Endothelial cell of umbilical vein (primary cell): ENCODE measurements at regions of chr14 and their contacts with region 1.

Region 1: GRCh38 chr14:21498553-21499526 is 12.3 kb downstream of the METTL3 start:
- DNase-seq: peak; percentile 55
- H3K4me3 ChIP-seq: no peak overlapping the region
- H3K27ac ChIP-seq: no peak overlapping the region
- H3K4me1 ChIP-seq: no peaks in the 10 kb centered on the region
- H3K27me3 ChIP-seq: no peaks in the 10 kb centered on the region
- CTCF ChIP-seq: peak; percentile 34 to 42
- POLR2A ChIP-seq: peak; percentile 10

Region 2: GRCh38 chr14:21182166-21182565 is 316.7 kb before region 1 on chr14:
- CTCF ChIA-PET with region 1: no interaction called
- POLR2A ChIA-PET with region 1: no interaction called
- dilution Hi-C with region 1: no loop called
- intact Hi-C with region 1: no loop called
- DNase-seq: no peak
- H3K4me3 ChIP-seq: no peak overlapping the region
- H3K27ac ChIP-seq: no peak overlapping the region
- H3K4me1 ChIP-seq: no peaks in the 10 kb centered on the region
- H3K27me3 ChIP-seq: peaks cover 2 to 20% of the 10 kb centered on the region in 2 experiments
- CTCF ChIP-seq: no peak
- POLR2A ChIP-seq: no peak

Region 3: DNA sequence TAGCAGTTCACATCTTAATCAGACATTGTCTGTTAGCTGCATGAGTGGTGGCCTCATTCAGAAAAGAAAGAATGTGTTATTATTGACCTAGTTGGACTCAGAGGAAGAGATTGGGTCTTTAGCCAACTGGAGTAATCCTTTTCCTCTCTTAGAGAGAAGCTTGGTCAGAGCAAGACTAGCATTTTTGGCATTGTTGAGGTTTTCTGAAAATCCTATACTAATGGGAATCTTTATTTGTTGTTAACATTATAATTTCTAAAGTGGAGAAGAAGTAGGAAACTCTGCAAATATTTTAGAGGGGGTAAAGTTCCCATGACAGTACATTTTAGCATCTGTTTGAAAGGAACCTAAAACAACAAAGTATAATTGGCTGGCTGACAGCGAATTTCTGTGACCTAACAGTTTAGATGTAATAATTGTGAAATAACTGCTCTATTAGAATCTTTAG is 12.2 kb before region 1 on chr14:
- CTCF ChIA-PET with region 1: interaction called, 15 read pairs
- POLR2A ChIA-PET with region 1: no interaction called
- dilution Hi-C with region 1: no loop called
- intact Hi-C with region 1: no loop called
- DNase-seq: no peak
- H3K4me3 ChIP-seq: no peak overlapping the region
- H3K27ac ChIP-seq: no peak overlapping the region
- H3K4me1 ChIP-seq: no peaks in the 10 kb centered on the region
- H3K27me3 ChIP-seq: no peaks in the 10 kb centered on the region
- CTCF ChIP-seq: no peak
- POLR2A ChIP-seq: no peak

Region 4: DNA sequence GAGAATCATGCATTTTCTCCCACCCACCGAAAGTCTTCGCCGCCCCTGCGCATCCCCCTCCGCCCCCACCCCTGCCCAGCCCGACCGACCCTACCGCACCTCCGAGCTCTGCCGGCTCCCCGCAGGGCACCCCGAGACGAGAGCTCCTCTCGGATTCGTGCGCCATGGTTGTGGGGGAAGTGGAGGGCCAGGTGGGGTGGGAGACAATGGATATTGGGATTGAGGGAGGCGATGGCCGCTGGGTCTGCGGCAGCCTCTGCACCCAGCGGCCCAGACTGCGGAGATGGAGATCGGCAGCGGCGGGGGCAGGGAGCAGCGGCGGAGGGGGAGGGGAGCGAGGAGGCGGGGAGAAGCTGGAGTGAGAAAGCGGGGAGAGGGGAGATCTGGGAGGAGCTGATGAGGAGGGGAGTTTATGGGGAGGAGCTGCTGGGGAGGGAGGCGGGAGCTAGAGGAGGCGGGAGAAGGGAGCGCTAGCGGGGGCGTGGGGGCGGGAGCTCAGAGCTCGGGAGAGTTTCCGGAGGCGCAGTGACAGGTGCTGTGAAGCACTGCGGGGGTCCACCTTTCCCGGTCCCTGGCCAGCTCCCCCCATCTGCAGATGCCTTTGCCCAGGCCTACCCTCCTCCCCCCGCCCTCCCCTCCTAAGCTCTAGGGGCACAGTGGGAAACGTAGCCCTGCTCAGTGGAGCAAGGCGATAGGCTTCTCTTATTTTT is 27.3 kb after region 1 on chr14 and contains the start of gene SALL2:
- CTCF ChIA-PET with region 1: interaction called, 28 read pairs
- POLR2A ChIA-PET with region 1: no interaction called
- dilution Hi-C with region 1: no loop called
- intact Hi-C with region 1: no loop called
- DNase-seq: peak; percentile 63
- H3K4me3 ChIP-seq: peak within 1 kb of the TSS; percentile 32 to 80 (median 67)
- H3K27ac ChIP-seq: no peak within 1 kb of the TSS
- H3K4me1 ChIP-seq: peaks cover 3% of the 10 kb centered on the region
- H3K27me3 ChIP-seq: peaks cover 20 to 21% of the 10 kb centered on the region in 2 experiments
- CTCF ChIP-seq: no peak
- POLR2A ChIP-seq: no peak
- total RNA-seq, gene SALL2: 4.6 and 6.8 TPM in 2 replicates

Region 5: GRCh38 chr14:21557084-21557901 is 58.5 kb after region 1 on chr14:
- CTCF ChIA-PET with region 1: interaction called, 128 read pairs
- POLR2A ChIA-PET with region 1: no interaction called
- dilution Hi-C with region 1: no loop called
- intact Hi-C with region 1: loop called (anchors 1 kb)
- DNase-seq: peak; percentile 88
- H3K4me3 ChIP-seq: peak overlapping the region in 2 of 3 experiments; percentile 25 to 30
- H3K27ac ChIP-seq: no peak overlapping the region
- H3K4me1 ChIP-seq: peaks cover 5% of the 10 kb centered on the region
- H3K27me3 ChIP-seq: no peaks in the 10 kb centered on the region
- CTCF ChIP-seq: peak; percentile 35 to 58
- POLR2A ChIP-seq: no peak

Region 6: GRCh38 chr14:21802441-21802840 is 303.6 kb after region 1 on chr14:
- CTCF ChIA-PET with region 1: no interaction called
- POLR2A ChIA-PET with region 1: no interaction called
- dilution Hi-C with region 1: no loop called
- intact Hi-C with region 1: no loop called
- DNase-seq: no peak
- H3K4me3 ChIP-seq: no peak overlapping the region
- H3K27ac ChIP-seq: no peak overlapping the region
- H3K4me1 ChIP-seq: no peaks in the 10 kb centered on the region
- H3K27me3 ChIP-seq: peaks cover 3% of the 10 kb centered on the region in 2 experiments
- CTCF ChIP-seq: no peak
- POLR2A ChIP-seq: no peak